Heart left ventricle (tissue), 16 donors: ENCODE measurements at regions of chr19 and their contacts with region 1.

Region 1: GRCh38 chr19:3434712-3435553 is 45.4 kb downstream of the SMIM24 start:
- DNase-seq: peak; percentile 97 to 98 (median 97)
- ATAC-seq: peak; percentile 86 to 97 (median 96)
- H3K4me3 ChIP-seq: peak overlapping the region in 11 of 12 donors; percentile 27 to 67 (median 54)
- H3K27ac ChIP-seq: peak overlapping the region; percentile 68 to 96 (median 88)
- H3K4me1 ChIP-seq: peaks cover 4 to 40% (median 24%) of the 10 kb centered on the region in 12 donors
- H3K27me3 ChIP-seq: no peaks in the 10 kb centered on the region
- CTCF ChIP-seq: no peak
- POLR2A ChIP-seq: peak in 1 of 2 donors; percentile 47

Region 2: GRCh38 chr19:3324321-3324856 is 110.5 kb before region 1 on chr19:
- intact Hi-C with region 1: loop called in 2 of 10 experiments (anchors 5 kb)
- DNase-seq: peak in 3 of 5 donors; percentile 28 to 78 (median 44)
- ATAC-seq: peak in 3 of 4 donors; percentile 47 to 49 (median 48)
- H3K4me3 ChIP-seq: no peak overlapping the region
- H3K27ac ChIP-seq: no peak overlapping the region
- H3K4me1 ChIP-seq: no peaks in the 10 kb centered on the region
- H3K27me3 ChIP-seq: peaks cover 8 to 24% (median 17%) of the 10 kb centered on the region in 9 donors
- CTCF ChIP-seq: peak; percentile 45 to 71 (median 60)
- POLR2A ChIP-seq: no peak

Region 3: DNA sequence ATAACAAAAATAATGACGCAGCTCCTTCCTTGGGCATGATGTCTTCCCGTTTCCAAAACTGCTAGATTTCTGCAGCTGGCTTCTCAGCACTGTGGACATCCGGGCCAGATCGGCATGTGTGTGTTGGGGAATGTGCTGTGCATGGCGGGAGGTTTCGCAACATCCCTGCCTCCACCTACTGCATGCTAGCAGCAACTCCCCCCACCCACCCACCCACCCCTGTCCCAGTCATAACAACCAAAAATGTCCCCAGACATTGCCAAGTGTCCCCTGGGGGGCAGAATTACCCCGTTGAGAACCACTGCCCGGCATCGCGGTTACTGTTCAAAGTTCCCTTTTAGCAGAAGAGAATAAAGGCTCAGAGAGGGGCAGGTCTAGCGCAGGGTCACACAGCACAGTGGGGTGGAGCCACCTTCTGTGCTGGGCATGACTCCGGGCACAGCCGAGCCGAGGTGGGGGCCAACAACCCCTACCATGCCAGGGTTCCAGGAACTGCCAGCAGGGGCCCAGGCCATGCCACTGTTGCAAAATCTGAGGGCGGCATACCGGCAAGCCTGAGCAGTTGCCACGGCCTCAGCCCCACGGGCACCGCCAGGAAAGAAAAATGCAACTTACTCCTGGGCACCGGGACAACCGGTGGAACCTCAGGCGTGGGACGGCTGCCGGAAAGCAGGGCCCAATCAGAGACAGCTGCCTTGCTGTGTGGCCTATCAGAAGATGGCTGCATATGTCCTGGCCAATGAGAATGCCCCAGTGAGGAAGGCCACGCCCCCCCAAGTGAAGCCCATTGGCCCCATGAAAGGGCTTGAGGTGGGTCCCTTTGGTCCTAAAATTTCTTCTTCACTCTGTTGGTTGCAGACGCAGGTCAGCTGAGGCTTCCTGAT is 91.1 kb before region 1 on chr19:
- intact Hi-C with region 1: loop called in 3 of 10 experiments (anchors 5 kb)
- DNase-seq: peak; percentile 81 to 90 (median 88)
- ATAC-seq: peak; percentile 65 to 86 (median 84)
- H3K4me3 ChIP-seq: peak overlapping the region in 10 of 12 donors; percentile 6 to 46 (median 32)
- H3K27ac ChIP-seq: peak overlapping the region in 11 of 12 donors; percentile 53 to 90 (median 66)
- H3K4me1 ChIP-seq: peaks cover 0 to 32% (median 18%) of the 10 kb centered on the region in 12 donors
- H3K27me3 ChIP-seq: no peaks in the 10 kb centered on the region
- CTCF ChIP-seq: peak in 4 of 12 donors; percentile 7 to 38 (median 15)
- POLR2A ChIP-seq: no peak